Ascending aorta (tissue), 2 donors: ENCODE measurements at regions of chr19 and their contacts with region 1.

Region 1: GRCh38 chr19:49546825-49547565 is 19.2 kb downstream of the RCN3 start:
- DNase-seq: peak in 1 of 2 donors; percentile 86
- H3K4me3 ChIP-seq: no peak overlapping the region
- H3K27ac ChIP-seq: no peak overlapping the region
- H3K4me1 ChIP-seq: no peaks in the 10 kb centered on the region
- H3K27me3 ChIP-seq: no peaks in the 10 kb centered on the region
- CTCF ChIP-seq: peak; percentile 80 to 90 (median 84)

Region 2: DNA sequence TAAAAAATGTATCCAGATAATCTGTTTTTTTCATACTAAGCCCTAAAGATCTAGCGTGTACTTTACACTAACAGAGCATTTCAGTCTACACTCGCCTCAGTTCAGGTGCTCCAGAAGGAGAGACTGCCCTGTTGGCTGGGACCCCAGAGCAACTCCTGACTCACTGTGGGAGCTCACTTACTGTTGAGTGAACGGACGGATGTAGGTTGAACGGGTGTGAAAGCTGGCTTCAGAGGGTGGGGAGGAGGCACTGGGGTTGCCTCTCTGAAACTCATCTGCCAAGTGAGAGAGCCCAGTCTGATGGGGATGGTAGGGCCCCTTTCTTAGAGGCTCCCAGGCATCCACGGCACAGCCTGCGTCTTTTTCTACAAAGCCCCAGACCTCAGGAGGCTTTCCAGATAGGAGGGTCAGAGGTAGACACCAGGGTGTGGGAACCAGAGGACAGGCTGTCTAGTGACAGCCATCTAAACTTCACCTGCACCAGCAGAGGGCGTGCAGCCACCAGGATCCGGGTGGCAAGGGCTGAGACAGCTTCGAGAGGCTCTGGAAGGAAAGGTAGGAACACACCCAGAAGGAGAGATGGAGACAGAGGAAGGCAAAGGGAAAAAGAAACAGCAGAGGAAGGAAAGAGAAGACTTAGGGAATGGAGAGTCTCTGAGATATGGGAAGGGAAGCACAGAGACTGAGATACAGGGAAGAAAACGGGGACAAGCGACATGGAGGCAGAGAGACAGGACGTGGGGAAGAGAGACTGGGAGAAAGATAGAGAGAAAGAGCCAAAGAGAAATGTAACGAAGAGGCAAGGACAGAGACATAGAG is 155.2 kb before region 1 on chr19:
- intact Hi-C with region 1: loop called (anchors 5 kb)
- DNase-seq: peak; percentile 23 to 77
- H3K4me3 ChIP-seq: no peak overlapping the region
- H3K27ac ChIP-seq: no peak overlapping the region
- H3K4me1 ChIP-seq: no peaks in the 10 kb centered on the region
- H3K27me3 ChIP-seq: no peaks in the 10 kb centered on the region
- CTCF ChIP-seq: peak; percentile 74 to 83 (median 76)

Region 3: DNA sequence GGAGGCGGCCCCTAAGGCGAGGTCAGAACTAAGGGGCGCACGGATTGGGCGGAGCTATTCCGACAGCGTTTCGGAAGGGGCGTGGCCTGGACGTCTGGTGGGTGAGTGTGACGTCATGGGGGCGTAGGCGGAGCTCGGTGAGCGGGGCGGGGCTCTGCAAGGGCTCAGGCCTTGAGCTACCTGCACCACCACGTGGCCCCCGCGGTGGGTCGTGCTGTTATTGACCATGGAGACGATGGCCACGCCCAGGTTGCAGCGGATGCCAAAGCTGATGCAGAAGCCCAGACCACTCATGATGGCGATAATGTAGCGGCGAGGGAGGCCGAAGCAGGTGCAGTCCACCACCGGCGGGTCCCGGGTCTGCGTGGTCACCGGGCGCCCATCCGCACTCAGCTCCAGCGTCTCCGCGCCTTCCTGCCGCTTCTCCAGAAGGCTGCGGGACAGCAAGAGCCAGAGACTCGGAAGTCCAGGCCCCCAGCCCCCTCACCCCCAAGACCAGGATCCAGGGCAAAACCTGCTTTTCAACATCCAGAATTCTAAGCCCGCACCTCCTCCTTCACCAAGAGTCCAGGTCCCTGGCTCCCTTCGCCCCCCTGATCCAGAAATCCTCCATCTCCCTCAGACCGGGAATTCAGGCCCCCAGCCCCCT is 110.5 kb before region 1 on chr19:
- intact Hi-C with region 1: no loop called
- DNase-seq: no peak
- H3K4me3 ChIP-seq: no peak overlapping the region
- H3K27ac ChIP-seq: no peak overlapping the region
- H3K4me1 ChIP-seq: no peaks in the 10 kb centered on the region
- H3K27me3 ChIP-seq: peaks cover 44% of the 10 kb centered on the region
- CTCF ChIP-seq: no peak

Region 4: DNA sequence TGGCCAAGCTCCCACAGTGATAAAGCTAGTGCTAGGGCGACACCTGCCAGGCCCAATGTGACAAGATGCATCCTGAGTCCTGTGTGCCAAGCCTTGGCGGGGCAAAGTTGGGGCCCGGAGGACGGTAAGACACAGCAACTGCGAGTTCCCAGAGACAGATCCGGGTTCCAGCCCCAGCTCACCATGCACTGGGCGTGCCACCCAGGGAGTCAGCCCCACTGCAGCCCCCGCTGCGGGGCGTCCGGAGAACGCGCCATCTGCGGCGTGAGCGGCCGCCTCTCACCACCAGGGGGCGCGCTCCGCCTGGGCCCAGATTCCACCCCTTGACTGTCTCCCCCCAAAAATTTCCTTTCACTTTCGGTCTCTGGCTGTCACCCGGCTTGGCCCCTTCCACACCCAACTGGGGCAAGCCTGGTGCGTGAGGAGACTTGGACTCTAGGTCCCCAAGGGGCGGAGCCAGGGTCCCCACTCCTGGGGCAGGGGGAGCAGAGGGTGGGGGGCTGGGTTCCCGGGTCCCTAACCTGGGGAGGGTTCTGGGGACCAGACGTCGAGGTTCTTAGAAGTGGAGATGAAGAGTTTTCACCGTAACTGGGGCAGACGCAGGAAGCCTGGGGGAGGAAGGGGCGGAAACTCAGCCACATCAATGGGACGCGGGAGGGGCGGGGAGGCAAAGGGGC is 73.0 kb before region 1 on chr19 and contains the start of gene FLT3LG:
- intact Hi-C with region 1: loop called (anchors 1 kb)
- DNase-seq: peak; percentile 44 to 88
- H3K4me3 ChIP-seq: peak within 1 kb of the TSS; percentile 68 to 86
- H3K27ac ChIP-seq: peak within 1 kb of the TSS; percentile 58 to 66
- H3K4me1 ChIP-seq: peaks cover 3 to 7% of the 10 kb centered on the region in 2 donors
- H3K27me3 ChIP-seq: no peaks in the 10 kb centered on the region
- CTCF ChIP-seq: peak; percentile 95 to 99 (median 98)
- total RNA-seq, gene FLT3LG: 37.3 TPM

Region 5: GRCh38 chr19:49502866-49503581 is 44.0 kb before region 1 on chr19:
- intact Hi-C with region 1: loop called (anchors 1 kb)
- DNase-seq: no peak
- H3K4me3 ChIP-seq: no peak overlapping the region
- H3K27ac ChIP-seq: no peak overlapping the region
- H3K4me1 ChIP-seq: peaks cover 4 to 5% of the 10 kb centered on the region in 2 donors
- H3K27me3 ChIP-seq: no peaks in the 10 kb centered on the region
- CTCF ChIP-seq: peak; percentile 44 to 58 (median 49)

Region 6: DNA sequence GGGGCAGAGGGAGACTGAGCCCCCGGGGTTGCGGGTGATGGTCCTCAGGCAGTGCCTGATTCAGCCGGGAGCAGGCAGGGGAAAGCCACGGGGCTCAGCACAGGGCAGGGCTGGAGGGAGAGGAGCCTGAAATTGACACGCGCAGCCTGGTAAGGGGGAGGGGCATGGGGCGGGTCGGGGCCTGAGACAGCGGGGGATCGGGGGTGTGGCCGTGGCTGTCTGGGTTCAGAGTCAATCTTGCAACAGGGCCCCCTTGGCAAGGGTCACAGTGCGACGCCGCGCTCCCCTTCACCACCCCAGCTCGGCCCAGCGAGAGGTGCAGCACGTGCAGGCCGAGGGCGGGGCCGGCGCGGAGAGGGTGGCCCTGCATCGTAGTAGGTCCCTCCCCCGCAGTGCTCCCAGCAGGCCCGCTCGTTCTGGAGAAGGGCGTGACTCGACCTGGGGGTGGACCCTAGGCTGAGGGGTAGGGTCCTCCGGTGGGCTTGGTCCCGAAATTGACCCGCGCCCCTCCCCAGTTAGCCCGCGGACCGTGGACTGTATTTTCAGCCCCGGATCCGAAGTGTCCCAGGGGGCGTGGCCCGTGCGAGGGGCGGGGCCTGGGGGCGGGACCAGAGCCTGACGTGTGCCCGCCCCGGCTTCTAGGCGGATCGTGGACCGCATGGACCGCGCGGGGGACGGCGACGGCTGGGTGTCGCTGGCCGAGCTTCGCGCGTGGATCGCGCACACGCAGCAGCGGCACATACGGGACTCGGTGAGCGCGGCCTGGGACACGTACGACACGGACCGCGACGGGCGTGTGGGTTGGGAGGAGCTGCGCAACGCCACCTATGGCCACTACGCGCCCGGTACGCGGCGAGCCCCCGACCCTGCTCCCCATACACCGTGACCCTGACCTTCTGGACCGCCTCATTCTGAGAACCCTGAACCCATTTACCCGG is 13.2 kb before region 1 on chr19:
- intact Hi-C with region 1: no loop called
- DNase-seq: peak in 1 of 2 donors; percentile 84
- H3K4me3 ChIP-seq: peak overlapping the region; percentile 51 to 68
- H3K27ac ChIP-seq: peak overlapping the region in 1 of 2 donors; percentile 17
- H3K4me1 ChIP-seq: peaks cover 6 to 14% of the 10 kb centered on the region in 2 donors
- H3K27me3 ChIP-seq: no peaks in the 10 kb centered on the region
- CTCF ChIP-seq: peak in 1 of 3 experiments; percentile 11

Region 7: DNA sequence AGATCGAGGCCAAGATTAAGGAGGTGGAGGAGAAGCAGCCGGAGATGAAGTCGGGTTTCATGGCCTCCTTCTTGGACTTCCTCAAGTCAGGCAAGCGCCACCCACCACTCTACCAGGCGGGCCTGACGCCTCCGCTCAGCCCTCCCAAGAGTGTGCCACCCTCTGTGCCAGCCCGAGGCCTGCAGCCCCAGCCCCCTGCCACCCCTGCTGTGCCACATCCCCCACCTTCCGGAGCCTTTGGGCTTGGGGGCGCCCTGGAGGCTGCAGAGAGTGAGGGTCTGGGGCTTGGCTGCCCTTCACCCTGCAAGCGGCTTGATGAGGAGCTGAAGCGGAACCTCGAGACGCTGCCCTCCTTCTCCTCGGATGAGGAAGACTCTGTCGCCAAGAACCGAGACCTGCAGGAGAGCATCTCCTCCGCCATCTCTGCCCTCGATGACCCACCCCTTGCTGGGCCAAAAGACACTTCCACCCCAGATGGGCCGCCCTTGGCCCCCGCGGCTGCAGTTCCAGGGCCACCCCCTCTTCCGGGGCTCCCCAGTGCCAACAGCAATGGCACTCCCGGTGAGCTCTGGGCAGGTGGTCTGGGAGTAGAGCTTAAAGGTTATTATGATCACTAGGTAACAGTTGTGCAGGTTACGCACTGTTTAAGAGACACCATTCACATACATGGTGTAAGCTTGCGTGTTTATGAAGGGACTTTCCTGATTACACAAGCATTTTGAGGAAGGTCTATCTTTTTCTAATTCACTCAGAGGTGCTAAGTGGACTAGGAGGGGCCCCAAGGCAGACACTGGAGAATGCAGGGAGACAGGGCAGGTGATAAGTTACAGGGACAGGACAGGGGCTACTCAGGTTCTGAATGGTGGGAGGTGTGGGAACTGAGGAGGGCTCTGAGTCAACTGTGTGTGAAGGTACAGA is 52.6 kb after region 1 on chr19:
- intact Hi-C with region 1: no loop called
- DNase-seq: no peak
- H3K4me3 ChIP-seq: no peak overlapping the region
- H3K27ac ChIP-seq: no peak overlapping the region
- H3K4me1 ChIP-seq: no peaks in the 10 kb centered on the region
- H3K27me3 ChIP-seq: no peaks in the 10 kb centered on the region
- CTCF ChIP-seq: no peak

Region 8: DNA sequence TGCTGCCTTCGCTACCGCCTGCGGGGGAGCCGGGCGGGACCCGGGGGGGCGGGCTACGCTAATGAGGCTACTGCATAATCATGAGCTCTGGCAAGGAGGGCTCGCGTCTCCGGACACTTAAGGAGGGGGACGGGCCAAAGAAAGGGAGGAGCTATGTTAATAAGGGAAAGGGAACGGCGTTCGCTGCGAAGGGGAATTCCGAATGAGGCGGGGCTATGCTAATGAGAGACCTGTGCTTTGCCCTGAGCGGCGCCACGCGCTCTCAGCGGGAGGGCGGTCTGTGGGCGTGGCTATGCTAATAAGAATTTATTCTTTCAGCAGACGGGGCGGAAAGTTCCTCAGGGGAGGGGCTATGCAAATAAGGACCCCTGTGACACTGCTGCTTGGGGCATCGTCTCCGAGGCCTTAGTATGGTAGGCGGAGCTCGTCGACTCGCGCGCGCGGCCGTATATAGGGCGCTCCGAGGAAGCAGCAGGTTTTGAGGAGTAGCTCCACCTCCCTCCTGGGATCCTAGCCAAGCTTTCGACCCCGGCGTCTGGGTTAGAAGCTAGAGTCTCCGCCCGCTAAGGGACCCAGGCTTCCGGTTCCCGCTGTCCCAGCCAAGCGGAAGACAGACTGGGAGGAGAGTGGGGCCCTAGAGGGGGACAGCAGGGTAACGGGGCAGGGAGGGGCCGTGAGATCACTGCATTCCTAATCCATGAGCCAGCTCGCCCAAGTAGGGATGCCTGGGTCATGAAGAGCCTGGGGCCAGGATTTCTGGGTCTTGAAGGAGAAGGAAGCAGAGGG is 93.3 kb after region 1 on chr19 and contains the start of gene RRAS:
- intact Hi-C with region 1: no loop called
- DNase-seq: peak; percentile 99 to 100
- H3K4me3 ChIP-seq: peak within 1 kb of the TSS; percentile 80 to 87
- H3K27ac ChIP-seq: peak within 1 kb of the TSS; percentile 99 to 100
- H3K4me1 ChIP-seq: peaks cover 20 to 24% of the 10 kb centered on the region in 2 donors
- H3K27me3 ChIP-seq: no peaks in the 10 kb centered on the region
- CTCF ChIP-seq: no peak
- total RNA-seq, gene RRAS: 161 TPM